Ascending aorta (tissue), 2 donors: ENCODE measurements at regions of chr9 and their contacts with region 1.

Region 1: GRCh38 chr9:35696525-35697215 is 6.9 kb upstream of the TPM2 start:
- DNase-seq: peak in 1 of 2 donors; percentile 82
- H3K4me3 ChIP-seq: no peak overlapping the region
- H3K27ac ChIP-seq: peak overlapping the region; percentile 93 to 97
- H3K4me1 ChIP-seq: peaks cover 3 to 48% of the 10 kb centered on the region in 2 donors
- H3K27me3 ChIP-seq: no peaks in the 10 kb centered on the region
- CTCF ChIP-seq: peak; percentile 79 to 87 (median 87)

Region 2: DNA sequence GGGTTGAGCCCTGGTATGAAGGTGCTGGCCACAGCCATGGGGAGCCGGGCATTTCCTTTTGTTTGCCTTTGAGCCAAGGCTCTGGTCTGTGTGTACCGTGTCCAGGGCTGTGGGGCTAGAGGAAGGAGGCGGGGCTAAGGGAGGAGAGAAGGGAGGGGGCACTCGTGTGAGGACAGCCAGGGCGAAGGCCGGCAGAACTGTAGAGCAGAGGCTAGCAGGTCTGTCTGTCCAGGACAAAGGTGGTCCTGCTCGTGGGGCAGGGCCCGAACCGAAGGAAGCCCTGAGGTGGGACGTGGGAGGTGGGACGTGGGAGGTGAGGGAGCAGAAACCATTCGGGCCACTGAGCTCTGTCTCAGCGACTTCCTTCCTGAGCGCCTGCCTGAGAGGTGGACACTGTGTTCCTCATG is 132.9 kb before region 1 on chr9:
- intact Hi-C with region 1: loop called (anchors 5 kb)
- DNase-seq: peak in 1 of 2 donors; percentile 85
- H3K4me3 ChIP-seq: peak overlapping the region; percentile 17 to 19
- H3K27ac ChIP-seq: peak overlapping the region; percentile 83 to 94
- H3K4me1 ChIP-seq: peaks cover 23 to 52% of the 10 kb centered on the region in 2 donors
- H3K27me3 ChIP-seq: no peaks in the 10 kb centered on the region
- CTCF ChIP-seq: no peak

Region 3: DNA sequence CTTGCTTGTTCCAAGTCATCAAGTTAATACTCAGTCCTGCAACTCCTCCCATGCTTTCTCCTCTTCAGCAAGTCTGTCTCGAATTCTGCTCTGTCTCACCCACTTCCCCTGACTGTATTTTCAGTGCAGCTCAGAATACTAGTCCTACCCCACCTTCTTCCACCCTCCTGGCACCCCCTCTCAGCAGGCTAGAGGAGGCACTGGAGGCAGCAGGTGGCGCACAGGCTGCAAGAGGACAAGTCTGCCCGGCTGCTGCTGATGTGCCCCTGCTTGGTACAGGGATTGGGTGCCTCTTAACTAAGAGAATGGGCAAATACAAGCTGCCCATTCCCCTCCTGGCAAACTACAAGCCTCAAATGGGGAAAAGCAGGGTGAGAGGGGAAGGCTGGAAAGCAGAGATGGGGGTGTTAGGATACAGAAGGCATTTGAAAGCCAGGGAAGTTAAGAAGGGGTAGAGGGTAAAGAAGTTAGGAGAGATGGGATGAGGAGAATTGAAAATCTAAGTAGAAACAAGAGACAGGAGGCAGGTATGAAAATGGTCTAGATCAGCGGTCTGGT is 30.3 kb after region 1 on chr9:
- intact Hi-C with region 1: loop called (anchors 1 kb)
- DNase-seq: peak; percentile 60 to 90
- H3K4me3 ChIP-seq: peak overlapping the region; percentile 74 to 81
- H3K27ac ChIP-seq: peak overlapping the region; percentile 98 to 99
- H3K4me1 ChIP-seq: peaks cover 11 to 20% of the 10 kb centered on the region in 2 donors
- H3K27me3 ChIP-seq: no peaks in the 10 kb centered on the region
- CTCF ChIP-seq: peak in 2 of 3 experiments; percentile 31 to 50

Region 4: DNA sequence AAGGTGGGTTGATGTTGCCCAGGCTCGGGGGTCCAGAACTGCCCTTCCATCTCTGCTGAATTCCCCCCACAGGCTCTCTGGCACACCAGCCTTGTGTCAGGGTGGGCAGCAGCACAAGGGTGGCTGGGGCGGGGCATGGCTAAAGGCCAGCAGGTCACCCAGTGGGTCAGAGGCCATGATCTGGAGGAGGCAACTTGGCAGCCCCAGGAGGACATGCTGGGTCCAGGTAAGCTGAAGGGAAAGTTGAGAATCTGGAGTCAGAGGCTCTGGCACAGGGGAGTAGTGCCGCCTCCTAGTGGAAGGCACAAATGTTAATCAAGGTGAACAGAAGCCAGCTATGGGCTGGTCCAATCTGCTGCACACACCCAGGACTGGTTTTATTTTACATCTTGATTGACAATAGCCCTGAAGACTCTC is 138.6 kb after region 1 on chr9:
- intact Hi-C with region 1: no loop called
- DNase-seq: no peak
- H3K4me3 ChIP-seq: no peak overlapping the region
- H3K27ac ChIP-seq: peak overlapping the region in 1 of 2 donors; percentile 12
- H3K4me1 ChIP-seq: peaks cover 0 to 20% of the 10 kb centered on the region in 2 donors
- H3K27me3 ChIP-seq: no peaks in the 10 kb centered on the region
- CTCF ChIP-seq: no peak